GM10248 (cell line): ENCODE measurements at regions of chr10 and their contacts with region 1.

Region 1: GRCh38 chr10:122298598-122299301 is 27.7 kb downstream of the BTBD16 start:
- DNase-seq: peak; percentile 79
- CTCF ChIP-seq: peak; percentile 91

Region 2: DNA sequence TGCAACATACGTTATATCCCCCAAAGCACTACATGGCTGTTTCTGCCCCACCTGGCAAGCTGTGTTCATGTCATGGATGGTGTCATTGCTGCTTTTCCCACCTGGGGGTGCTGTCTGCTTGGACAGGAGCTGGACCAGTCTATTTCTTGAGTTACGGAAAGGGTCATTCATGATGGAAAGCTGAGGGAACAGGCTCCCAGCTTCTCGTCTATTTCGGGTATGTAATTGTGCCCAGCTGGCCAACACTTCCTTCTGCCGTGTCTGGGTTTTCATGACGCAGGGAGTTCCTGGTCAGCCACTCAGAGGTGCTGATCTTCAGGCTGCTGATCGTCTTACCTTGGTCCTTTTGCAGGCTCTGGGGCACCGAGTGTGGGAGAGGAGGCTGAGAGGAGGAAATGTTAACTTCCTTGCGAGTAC is 19.0 kb before region 1 on chr10:
- CTCF ChIA-PET with region 1: interaction called, 86 read pairs
- POLR2A ChIA-PET with region 1: no interaction called
- DNase-seq: peak; percentile 37
- CTCF ChIP-seq: peak; percentile 67

Region 3: DNA sequence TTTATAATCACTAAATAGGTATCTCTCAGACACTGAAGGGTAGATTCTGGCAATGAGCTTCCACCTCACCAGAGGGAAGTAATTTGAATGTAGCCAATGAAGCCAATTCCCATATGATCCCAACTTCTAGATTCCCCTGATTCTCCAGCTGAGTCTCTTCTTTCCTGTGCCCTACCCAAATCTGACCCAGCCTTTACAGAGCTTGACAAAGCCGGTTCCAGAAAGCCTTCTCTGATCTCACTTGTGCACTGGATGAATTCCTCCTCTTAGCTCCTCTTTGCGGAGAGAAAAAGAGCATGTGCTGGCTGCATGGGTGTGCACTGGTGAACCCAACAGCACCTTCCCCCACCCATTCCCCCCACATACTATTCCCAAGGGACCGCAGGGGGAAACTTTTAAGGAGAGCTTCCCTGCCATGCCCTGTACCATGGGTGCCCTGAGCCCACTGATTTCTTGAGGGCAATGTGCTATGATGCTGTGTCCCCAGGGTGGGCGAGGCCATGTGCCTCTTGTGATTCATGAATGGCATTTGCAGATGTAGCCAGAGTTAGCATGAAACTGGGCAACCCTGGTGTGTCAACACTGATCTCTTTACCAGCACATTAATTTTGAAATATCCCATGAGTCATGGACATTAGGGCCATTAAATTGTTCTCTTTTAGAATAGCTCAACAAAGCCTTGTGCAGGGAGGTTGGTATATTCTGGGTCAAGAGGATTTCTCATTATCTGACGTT is 25.4 kb after region 1 on chr10:
- CTCF ChIA-PET with region 1: interaction called, 29 read pairs
- POLR2A ChIA-PET with region 1: no interaction called
- DNase-seq: no peak
- CTCF ChIP-seq: no peak

Region 4: DNA sequence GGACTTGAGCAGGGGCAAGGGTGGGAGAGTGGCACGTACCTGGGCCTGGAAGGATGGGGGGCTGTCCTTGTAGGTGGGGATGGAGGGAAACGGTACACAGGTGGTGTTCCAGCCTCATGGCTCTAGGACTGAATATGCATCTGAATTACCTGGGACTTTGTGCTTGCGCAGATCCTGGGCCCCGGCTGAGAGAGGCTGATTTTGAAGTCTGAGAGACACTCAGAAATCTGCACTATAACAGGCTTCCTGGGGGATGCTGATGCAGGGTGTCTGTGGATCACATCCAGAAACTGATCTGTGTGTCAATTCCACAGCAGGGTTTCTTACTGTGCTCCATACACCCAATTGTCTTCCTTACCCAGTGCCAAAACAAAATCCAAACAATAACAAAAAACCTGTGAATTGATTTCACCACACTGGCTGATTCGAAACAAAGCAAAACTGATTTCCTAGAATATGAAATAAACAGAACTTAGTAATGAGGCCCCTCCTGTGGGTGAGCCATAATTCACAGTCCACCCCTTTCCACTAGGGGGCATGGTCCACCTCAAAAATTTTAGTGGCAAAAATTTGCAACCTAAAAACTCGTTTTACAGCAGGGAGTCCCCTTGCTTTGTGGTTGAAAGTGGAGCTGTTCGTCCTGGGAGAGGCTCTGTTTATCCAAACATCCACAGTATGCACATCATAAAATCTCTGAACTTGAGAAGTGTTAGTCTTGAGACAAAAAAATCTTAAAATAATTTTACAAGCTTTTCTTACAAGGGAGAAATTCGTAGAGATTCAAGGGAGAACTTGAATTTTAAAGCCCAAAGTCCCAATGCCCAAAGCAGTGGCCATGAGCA is 43.8 kb after region 1 on chr10:
- CTCF ChIA-PET with region 1: interaction called, 15 read pairs
- POLR2A ChIA-PET with region 1: no interaction called
- DNase-seq: peak; percentile 62
- CTCF ChIP-seq: peak; percentile 62